ENCODE measurements at regions of chrX and their contacts with region 1.

Region 1: DNA sequence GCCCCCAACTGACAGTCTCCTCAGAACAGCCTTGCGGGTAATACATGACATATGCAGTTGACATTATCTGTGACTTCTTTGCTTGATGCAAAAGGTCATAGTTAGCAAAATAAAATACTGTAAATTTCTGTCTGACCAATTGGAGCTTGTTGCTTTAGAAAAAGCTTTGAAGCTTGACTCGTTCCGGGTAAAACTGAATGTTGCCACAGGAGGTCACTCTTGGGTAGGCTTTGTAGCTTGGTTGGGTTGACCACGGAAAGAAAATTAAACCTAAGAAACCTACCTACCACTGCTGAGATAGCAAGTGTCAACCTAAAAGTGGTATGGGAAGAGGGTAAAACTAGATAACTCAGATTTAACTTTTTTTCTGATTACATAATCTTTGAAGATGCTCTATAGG is 23.2 kb downstream of the PRPS2 start:
- DNase-seq: peak; percentile 8 to 59 (median 33)
- ATAC-seq: peak; percentile 67
- H3K4me3 ChIP-seq: no peak overlapping the region
- H3K4me3 Mint-ChIP-seq: no peak overlapping the region
- H3K27ac ChIP-seq: no peak overlapping the region
- H3K27ac Mint-ChIP-seq: peak overlapping the region in 2 of 9 donors; percentile 45 to 48
- H3K4me1 ChIP-seq: no peaks in the 10 kb centered on the region
- H3K4me1 Mint-ChIP-seq: peaks cover 0 to 38% (median 0%) of the 10 kb centered on the region in 7 donors
- H3K27me3 ChIP-seq: no peaks in the 10 kb centered on the region
- H3K27me3 Mint-ChIP-seq: no peaks in the 10 kb centered on the region

Region 2: GRCh38 chrX:12843668-12844279 is 29.4 kb after region 1 on chrX:
- CTCF ChIA-PET with region 1: no interaction called
- POLR2A ChIA-PET with region 1: no interaction called
- intact Hi-C with region 1: loop called in 1 of 2 experiments (anchors 2 kb)
- DNase-seq: peak in 3 of 9 donors; percentile 2 to 5 (median 3)
- ATAC-seq: no peak
- H3K4me3 ChIP-seq: peak overlapping the region; percentile 46
- H3K4me3 Mint-ChIP-seq: peak overlapping the region; percentile 54 to 89 (median 80)
- H3K27ac ChIP-seq: peak overlapping the region; percentile 57
- H3K27ac Mint-ChIP-seq: peak overlapping the region; percentile 80 to 98 (median 92)
- H3K4me1 ChIP-seq: peaks cover 0 to 6% of the 10 kb centered on the region in 2 donors
- H3K4me1 Mint-ChIP-seq: peaks cover 0 to 16% (median 8%) of the 10 kb centered on the region in 7 donors
- H3K27me3 ChIP-seq: no peaks in the 10 kb centered on the region
- H3K27me3 Mint-ChIP-seq: no peaks in the 10 kb centered on the region

Region 3: DNA sequence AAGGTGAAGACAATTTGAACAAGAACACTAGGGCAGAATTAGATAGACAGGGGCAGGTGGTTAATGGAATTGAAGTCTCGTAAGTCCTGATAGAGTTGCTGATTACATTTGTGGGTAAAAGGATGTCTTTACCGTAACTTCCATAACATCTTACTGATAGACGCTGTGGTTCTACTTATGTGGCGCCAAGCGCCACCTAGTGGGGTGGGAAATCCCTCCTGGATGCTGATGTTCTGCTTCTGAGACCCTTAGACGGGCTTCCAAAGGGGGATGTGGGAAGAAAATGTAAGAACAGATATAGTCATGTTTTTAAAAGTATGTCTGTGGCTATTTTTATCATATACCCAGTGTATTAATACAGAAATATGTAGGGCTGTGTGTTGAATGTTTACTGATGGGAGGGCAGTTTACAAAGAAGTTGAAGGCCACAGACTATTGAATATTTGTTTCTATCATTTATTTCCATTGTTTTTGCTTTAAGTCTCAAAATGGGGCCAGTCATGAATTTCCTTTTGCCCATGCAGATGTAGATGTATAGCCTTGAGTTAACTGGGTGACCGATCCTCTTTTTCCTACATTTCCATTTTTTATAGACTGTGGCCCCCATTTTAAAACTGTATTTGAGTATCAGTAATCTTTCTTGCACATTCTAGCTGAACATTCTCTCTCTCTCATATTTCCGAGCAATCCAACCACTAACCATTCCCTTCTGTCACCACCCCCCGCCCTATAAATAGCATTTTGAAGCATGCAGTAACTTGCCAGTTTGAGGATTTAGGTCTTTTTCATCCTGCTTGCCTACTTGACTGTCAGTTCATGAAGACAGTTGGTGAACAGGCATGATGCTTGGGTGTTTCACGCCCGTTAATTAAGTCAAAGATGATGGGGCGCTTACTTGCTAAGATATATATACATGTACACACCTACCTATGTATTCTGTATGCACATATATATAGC is 79.9 kb after region 1 on chrX:
- CTCF ChIA-PET with region 1: interaction called, 11 read pairs
- POLR2A ChIA-PET with region 1: no interaction called
- intact Hi-C with region 1: loop called (anchors 1 kb)
- DNase-seq: peak; percentile 10 to 56 (median 35)
- ATAC-seq: peak; percentile 67
- H3K4me3 ChIP-seq: no peak overlapping the region
- H3K4me3 Mint-ChIP-seq: peak overlapping the region in 2 of 10 donors; percentile 44 to 51
- H3K27ac ChIP-seq: no peak overlapping the region
- H3K27ac Mint-ChIP-seq: peak overlapping the region in 5 of 9 donors; percentile 5 to 82 (median 77)
- H3K4me1 ChIP-seq: peaks cover 0 to 13% of the 10 kb centered on the region in 2 donors
- H3K4me1 Mint-ChIP-seq: peaks cover 4 to 56% (median 20%) of the 10 kb centered on the region in 7 donors
- H3K27me3 ChIP-seq: no peaks in the 10 kb centered on the region
- H3K27me3 Mint-ChIP-seq: no peaks in the 10 kb centered on the region

Region 4: DNA sequence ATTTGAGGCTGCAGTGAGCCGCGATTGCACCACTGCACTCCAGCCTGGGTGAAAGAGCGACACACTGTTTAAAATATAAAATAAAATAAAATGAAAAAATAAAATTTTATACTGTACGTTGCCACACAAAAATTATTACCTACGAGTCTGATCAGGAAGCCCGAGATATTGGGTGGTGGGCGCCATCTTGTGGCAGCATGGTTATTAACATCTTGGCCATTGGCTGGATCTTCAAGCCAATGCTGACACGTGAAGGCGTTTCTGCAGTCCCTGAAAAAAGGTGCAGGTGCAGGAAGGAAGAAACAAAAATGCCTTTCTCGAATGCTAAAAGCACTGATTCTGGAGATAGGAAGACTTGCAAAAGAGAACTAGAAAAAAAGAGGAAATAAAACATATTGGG is 87.1 kb after region 1 on chrX:
- CTCF ChIA-PET with region 1: interaction called, 11 read pairs
- POLR2A ChIA-PET with region 1: no interaction called
- intact Hi-C with region 1: loop called in 1 of 2 experiments (anchors 1 kb)
- DNase-seq: peak; percentile 28 to 65 (median 54)
- ATAC-seq: peak; percentile 68
- H3K4me3 ChIP-seq: no peak overlapping the region
- H3K4me3 Mint-ChIP-seq: peak overlapping the region in 2 of 10 donors; percentile 1 to 72
- H3K27ac ChIP-seq: no peak overlapping the region
- H3K27ac Mint-ChIP-seq: peak overlapping the region in 1 of 9 donors; percentile 57
- H3K4me1 ChIP-seq: no peaks in the 10 kb centered on the region
- H3K4me1 Mint-ChIP-seq: peaks cover 3 to 11% (median 5%) of the 10 kb centered on the region in 7 donors
- H3K27me3 ChIP-seq: no peaks in the 10 kb centered on the region
- H3K27me3 Mint-ChIP-seq: no peaks in the 10 kb centered on the region

Region 5: DNA sequence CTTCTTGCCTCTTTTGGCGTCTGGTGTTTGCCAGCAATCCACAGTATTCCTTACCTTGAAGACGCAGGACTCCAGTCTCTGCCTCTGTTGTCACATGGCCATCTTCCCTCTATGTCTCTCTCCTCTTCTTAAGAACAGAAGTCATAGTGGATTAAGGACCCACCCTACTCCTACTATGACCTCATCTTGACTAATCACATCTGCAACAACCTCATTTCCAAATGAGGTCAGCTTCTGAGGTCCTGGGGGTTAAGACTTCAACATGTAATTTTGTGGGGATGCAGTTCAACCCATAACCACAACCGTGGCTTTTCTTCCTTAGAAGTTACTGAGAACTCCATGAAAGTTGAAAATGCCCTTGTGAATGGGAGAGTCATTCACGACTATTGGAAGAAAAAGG is 115.3 kb after region 1 on chrX:
- CTCF ChIA-PET with region 1: no interaction called
- POLR2A ChIA-PET with region 1: no interaction called
- intact Hi-C with region 1: no loop called
- DNase-seq: no peak
- ATAC-seq: no peak
- H3K4me3 ChIP-seq: no peak overlapping the region
- H3K4me3 Mint-ChIP-seq: no peak overlapping the region
- H3K27ac ChIP-seq: no peak overlapping the region
- H3K27ac Mint-ChIP-seq: no peak overlapping the region
- H3K4me1 ChIP-seq: no peaks in the 10 kb centered on the region
- H3K4me1 Mint-ChIP-seq: peaks cover 0 to 4% (median 0%) of the 10 kb centered on the region in 7 donors
- H3K27me3 ChIP-seq: no peaks in the 10 kb centered on the region
- H3K27me3 Mint-ChIP-seq: peaks cover 0 to 4% (median 0%) of the 10 kb centered on the region in 5 donors

Region 6: GRCh38 chrX:13487731-13488523 is 673.5 kb after region 1 on chrX:
- CTCF ChIA-PET with region 1: interaction called, 3 read pairs
- POLR2A ChIA-PET with region 1: interaction called, 3 read pairs
- intact Hi-C with region 1: loop called in 1 of 2 experiments (anchors 1 kb)
- DNase-seq: peak in 8 of 9 donors; percentile 22 to 73 (median 52)
- ATAC-seq: peak; percentile 79
- H3K4me3 ChIP-seq: no peak overlapping the region
- H3K4me3 Mint-ChIP-seq: peak overlapping the region in 2 of 10 donors; percentile 11 to 48
- H3K27ac ChIP-seq: no peak overlapping the region
- H3K27ac Mint-ChIP-seq: peak overlapping the region in 8 of 9 donors; percentile 23 to 87 (median 64)
- H3K4me1 ChIP-seq: peaks cover 11 to 27% of the 10 kb centered on the region in 2 donors
- H3K4me1 Mint-ChIP-seq: peaks cover 4 to 39% (median 27%) of the 10 kb centered on the region in 7 donors
- H3K27me3 ChIP-seq: no peaks in the 10 kb centered on the region
- H3K27me3 Mint-ChIP-seq: no peaks in the 10 kb centered on the region

Region 7: DNA sequence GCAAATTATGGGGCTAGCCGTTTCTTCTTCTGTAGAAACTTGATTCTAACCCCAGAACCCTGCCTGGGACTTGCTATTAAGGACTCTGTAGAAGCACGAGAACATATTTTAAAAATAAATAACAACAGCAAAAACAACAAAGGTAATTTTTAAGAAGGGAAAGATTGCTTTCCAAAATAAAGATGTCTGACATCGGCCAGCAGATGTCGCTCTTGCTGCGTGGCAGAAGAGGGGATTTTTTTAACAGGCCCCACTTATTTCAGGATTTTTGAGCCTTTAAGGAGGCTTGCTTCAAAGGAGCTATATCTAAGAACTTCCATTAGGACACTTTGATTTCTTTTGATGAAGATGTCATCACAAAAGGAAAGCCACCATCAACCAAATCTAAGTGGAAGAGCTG is 692.2 kb after region 1 on chrX:
- CTCF ChIA-PET with region 1: no interaction called
- POLR2A ChIA-PET with region 1: no interaction called
- intact Hi-C with region 1: loop called in 1 of 2 experiments (anchors 10 kb)
- DNase-seq: peak in 8 of 9 donors; percentile 10 to 47 (median 32)
- ATAC-seq: no peak
- H3K4me3 ChIP-seq: no peak overlapping the region
- H3K4me3 Mint-ChIP-seq: no peak overlapping the region
- H3K27ac ChIP-seq: no peak overlapping the region
- H3K27ac Mint-ChIP-seq: peak overlapping the region in 1 of 9 donors; percentile 15
- H3K4me1 ChIP-seq: no peaks in the 10 kb centered on the region
- H3K4me1 Mint-ChIP-seq: peaks cover 0 to 8% (median 2%) of the 10 kb centered on the region in 7 donors
- H3K27me3 ChIP-seq: no peaks in the 10 kb centered on the region
- H3K27me3 Mint-ChIP-seq: no peaks in the 10 kb centered on the region

Region 8: DNA sequence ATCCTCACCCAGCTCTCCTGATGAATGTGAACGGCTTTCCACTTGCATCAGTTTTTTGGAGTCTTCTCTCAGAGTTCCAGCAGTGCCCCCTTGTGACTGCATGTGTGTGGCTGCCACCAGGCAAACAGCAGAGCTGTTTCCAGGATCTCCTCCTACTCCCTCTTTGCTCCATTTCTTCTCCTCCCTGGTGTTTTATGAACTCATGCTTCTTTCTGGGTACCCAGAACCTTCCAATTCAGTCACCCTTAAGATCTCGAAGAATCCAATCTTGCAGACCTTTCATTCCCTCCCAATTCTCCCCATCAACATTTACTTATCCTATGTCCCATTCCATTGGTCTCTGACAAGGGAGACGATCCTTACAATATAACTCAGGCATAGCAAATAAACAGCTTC is 831.7 kb after region 1 on chrX:
- CTCF ChIA-PET with region 1: no interaction called
- POLR2A ChIA-PET with region 1: no interaction called
- intact Hi-C with region 1: loop called in 1 of 2 experiments (anchors 1 kb)
- DNase-seq: peak in 4 of 9 donors; percentile 4 to 23 (median 11)
- ATAC-seq: no peak
- H3K4me3 ChIP-seq: no peak overlapping the region
- H3K4me3 Mint-ChIP-seq: no peak overlapping the region
- H3K27ac ChIP-seq: no peak overlapping the region
- H3K27ac Mint-ChIP-seq: peak overlapping the region in 3 of 9 donors; percentile 32 to 65 (median 52)
- H3K4me1 ChIP-seq: no peaks in the 10 kb centered on the region
- H3K4me1 Mint-ChIP-seq: peaks cover 0 to 14% (median 6%) of the 10 kb centered on the region in 7 donors
- H3K27me3 ChIP-seq: no peaks in the 10 kb centered on the region
- H3K27me3 Mint-ChIP-seq: no peaks in the 10 kb centered on the region

Measured in naive thymus-derived CD4-positive, alpha-beta T cell (primary cell).